ENCODE measurements at regions of chr1 and their contacts with region 1.

Region 1: GRCh38 chr1:201481761-201482493 is 12.9 kb upstream of the PHLDA3 start:
- DNase-seq: peak; percentile 93
- H3K27ac ChIP-seq: peak overlapping the region; percentile 86
- CTCF ChIP-seq: peak; percentile 87

Region 2: GRCh38 chr1:201119206-201120197 is 362.4 kb before region 1 on chr1:
- CTCF ChIA-PET with region 1: no interaction called
- POLR2A ChIA-PET with region 1: no interaction called
- DNase-seq: peak; percentile 45
- H3K27ac ChIP-seq: no peak overlapping the region
- CTCF ChIP-seq: peak; percentile 44

Region 3: GRCh38 chr1:201436393-201436792 is 45.5 kb before region 1 on chr1:
- CTCF ChIA-PET with region 1: interaction called, 29 read pairs
- POLR2A ChIA-PET with region 1: no interaction called
- DNase-seq: no peak
- H3K27ac ChIP-seq: no peak overlapping the region
- CTCF ChIP-seq: no peak

Region 4: GRCh38 chr1:201456499-201457309 is 25.2 kb before region 1 on chr1:
- CTCF ChIA-PET with region 1: interaction called, 77 read pairs
- POLR2A ChIA-PET with region 1: interaction called, 5 read pairs
- DNase-seq: peak; percentile 54
- H3K27ac ChIP-seq: peak overlapping the region; percentile 70
- CTCF ChIP-seq: no peak

Region 5: DNA sequence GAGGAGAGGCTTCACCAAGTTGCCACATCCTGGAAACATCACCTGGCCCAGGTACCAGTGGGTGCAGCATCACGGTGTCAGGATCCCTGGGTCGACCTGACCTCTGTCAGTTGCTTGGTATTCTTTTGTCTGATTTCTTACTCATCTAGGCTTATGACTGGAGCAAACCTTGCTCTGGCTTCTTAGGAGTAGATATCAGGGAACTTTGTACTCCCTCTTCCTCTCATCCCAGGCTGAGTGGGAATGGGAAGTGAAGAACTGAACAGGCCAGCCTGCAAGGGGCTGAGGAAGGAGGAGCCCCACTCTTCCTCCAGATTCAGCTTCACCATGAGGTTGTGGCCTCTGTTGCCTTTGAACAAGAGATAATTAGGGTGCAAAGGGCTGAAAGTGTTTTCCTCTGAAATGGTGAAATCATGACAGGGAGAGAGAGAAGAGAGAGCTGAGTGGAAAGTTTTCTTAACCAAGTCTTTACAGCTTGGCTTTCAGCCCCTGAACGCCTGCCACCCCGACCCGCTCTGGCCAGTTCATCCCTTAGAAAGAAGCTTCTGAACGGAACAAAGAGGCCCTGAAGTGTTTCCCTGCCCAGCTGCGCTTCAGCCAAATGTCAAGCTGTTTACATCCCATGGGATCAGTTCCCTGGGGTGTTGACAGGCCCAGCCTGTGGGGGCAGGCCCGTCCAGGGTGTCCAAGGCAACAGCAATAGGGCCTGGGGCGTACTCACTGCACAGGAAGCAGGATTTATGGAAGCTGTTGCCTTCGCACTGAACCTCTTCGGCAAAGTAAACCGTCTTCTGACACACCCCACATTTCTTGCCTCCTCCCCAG is 13.8 kb after region 1 on chr1:
- CTCF ChIA-PET with region 1: interaction called, 22 read pairs
- POLR2A ChIA-PET with region 1: interaction called, 5 read pairs
- DNase-seq: peak; percentile 80
- H3K27ac ChIP-seq: peak overlapping the region; percentile 88
- CTCF ChIP-seq: no peak

Region 6: DNA sequence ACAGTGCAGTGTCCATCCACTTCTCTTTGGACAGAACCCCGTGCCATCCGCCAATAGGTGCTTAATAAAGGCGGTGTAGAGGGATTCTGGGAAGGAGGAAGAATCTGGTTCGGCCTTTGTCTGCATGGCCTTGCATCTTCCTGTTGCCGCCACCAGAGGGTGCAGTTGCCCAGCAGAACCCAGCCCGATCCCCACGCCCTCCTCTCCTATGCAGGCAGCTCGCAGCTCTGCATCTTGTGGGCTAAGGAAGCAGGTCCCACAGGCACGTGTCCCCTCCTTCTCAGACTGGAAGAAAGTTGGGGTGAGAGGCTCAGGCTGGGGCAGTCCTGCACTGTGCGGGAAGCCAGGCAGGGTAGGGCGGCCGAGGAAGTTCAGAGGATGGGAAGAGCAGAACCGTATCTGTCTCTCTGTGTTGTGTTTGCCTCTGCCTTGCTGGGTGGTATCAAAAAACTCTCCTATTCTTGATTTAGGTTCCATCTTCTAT is 77.8 kb after region 1 on chr1:
- CTCF ChIA-PET with region 1: interaction called, 10 read pairs
- POLR2A ChIA-PET with region 1: no interaction called
- DNase-seq: peak; percentile 96
- H3K27ac ChIP-seq: peak overlapping the region; percentile 55; the same call in 1 of the 2 replicates
- CTCF ChIP-seq: peak; percentile 88

Region 7: GRCh38 chr1:201640624-201641023 is 158.7 kb after region 1 on chr1:
- CTCF ChIA-PET with region 1: no interaction called
- POLR2A ChIA-PET with region 1: no interaction called
- DNase-seq: no peak
- H3K27ac ChIP-seq: no peak overlapping the region
- CTCF ChIP-seq: no peak

Region 8: DNA sequence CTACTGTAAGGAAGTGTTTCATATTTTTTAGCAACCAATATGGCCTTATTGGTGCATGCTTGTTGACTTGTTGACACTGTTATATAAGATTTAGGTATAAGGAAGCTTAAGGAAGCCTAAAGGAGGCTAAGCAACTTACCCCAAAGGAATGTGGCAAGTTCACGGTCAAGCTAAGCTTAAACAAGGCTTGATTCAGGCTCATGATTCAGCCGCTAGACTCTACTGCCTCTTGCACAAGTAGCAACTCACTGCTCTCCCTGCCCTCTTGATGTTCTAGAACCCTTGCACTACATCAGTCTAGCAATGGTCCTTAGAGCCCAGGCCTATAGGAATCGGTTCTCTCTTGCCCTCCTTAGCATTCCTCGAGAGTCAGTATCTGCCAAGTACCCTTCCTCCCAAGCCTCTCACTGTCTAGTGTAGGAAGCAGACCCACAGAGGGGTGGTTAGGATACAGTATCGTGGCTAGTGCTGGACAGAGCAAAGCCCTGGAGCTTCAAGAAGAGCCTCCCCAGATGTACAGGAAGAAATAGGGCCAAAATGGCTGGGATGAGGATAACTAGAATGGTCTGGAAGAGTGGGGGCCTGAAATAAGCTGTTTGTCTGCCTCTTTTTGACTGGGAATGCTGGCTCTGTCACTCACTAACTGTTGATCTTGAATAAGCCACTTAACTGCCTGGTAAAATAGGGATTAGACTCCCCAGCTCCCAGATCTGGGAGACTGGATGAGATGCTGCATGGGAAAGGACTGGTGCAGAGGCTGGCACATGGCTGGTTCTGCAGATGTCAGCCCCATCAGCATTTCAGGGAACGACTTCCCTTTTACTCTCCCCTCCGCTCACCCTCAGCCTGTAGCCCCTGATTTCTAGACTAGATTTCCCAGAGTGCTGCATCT is 179.2 kb after region 1 on chr1:
- CTCF ChIA-PET with region 1: no interaction called
- POLR2A ChIA-PET with region 1: no interaction called
- DNase-seq: no peak
- H3K27ac ChIP-seq: no peak overlapping the region
- CTCF ChIP-seq: no peak